K562 (cell line): ENCODE measurements at regions of chr20 and their contacts with region 1.

Region 1: GRCh38 chr20:38453941-38454340 is 18.7 kb upstream of the RALGAPB start:
- DNase-seq: no peak
- ATAC-seq: no peak
- H3K4me3 ChIP-seq: no peak overlapping the region
- H3K27ac ChIP-seq: no peak overlapping the region; the same call in 2 of the 3 replicates
- H3K4me1 ChIP-seq: peaks cover 20 to 43% of the 10 kb centered on the region in 2 experiments
- H3K27me3 ChIP-seq: peaks cover 4 to 12% of the 10 kb centered on the region in 2 experiments; a peak in 4 of 5 replicates
- CTCF ChIP-seq: no peak
- EP300 ChIP-seq: no peak
- POLR2A ChIP-seq: no peak
- RAD21 ChIP-seq: no peak

Region 2: DNA sequence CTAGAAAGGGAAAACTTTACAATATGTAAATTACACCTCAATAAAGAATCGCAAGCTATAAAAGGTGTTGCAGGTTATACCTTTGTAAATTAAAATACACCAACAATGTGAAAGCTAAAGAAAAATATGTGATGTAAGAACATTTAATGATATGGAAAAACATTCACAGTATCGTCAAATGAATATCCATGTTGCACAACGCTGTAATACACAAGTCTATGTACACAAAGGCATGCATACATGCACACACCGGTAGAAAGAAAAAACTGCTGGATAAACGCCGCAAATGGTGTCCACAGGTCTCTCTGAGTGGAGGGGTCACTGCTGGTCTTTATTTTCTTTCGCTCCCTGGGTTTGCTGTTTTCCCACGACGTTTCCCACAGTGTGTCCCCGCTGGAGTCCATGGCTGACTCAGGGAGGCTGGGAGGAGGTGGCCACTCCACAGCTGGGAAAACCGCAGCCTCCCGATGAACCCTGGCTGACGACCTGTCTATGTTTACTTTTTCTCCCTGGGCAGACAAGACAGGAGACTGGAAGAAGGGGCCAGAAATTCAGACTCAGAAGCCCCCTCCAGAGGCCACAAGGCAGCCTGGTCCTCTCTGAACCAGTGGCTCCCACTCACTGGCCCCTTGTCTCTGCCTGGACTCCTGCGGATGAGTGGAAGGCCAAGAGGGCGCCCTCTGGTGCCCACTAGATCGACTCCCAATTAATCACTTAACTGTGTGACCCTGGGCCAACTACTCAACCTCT is 162.9 kb before region 1 on chr20:
- CTCF ChIA-PET with region 1: no interaction called
- POLR2A ChIA-PET with region 1: no interaction called
- in situ Hi-C with region 1: no loop called
- intact Hi-C with region 1: no loop called
- DNase-seq: peak; percentile 38 to 51 (median 48)
- ATAC-seq: peak; percentile 91
- H3K4me3 ChIP-seq: no peak overlapping the region
- H3K27ac ChIP-seq: no peak overlapping the region
- H3K4me1 ChIP-seq: no peaks in the 10 kb centered on the region; a peak in 1 of 5 replicates
- H3K27me3 ChIP-seq: peaks cover 50 to 70% of the 10 kb centered on the region in 2 experiments
- CTCF ChIP-seq: peak; percentile 59 to 67 (median 61)
- EP300 ChIP-seq: no peak
- POLR2A ChIP-seq: no peak
- RAD21 ChIP-seq: peak in 1 of 2 experiments; percentile 42; a peak in 2 of 4 replicates

Region 3: DNA sequence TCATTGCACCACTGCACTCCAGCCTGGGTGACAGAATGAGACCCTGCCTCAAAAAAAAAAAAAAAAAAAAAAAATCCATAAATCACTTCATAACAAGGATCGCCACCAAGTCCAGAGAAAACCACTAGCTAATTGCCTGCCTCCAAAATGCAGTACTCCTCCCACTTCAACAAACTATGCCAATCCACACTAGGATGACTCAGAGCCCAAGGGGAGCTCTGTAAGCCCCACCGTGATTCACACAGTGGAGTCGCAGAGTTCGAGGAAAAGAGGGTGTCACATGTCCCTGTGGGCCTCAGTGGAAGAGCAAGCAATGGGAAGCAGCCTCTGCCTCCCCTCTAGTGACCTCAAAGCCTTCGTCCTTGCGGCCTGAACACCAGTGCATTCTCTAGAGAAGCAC is 27.9 kb before region 1 on chr20:
- CTCF ChIA-PET with region 1: no interaction called
- POLR2A ChIA-PET with region 1: interaction called, 14 read pairs
- in situ Hi-C with region 1: no loop called
- intact Hi-C with region 1: no loop called
- DNase-seq: peak in 2 of 4 experiments; percentile 54 to 59
- ATAC-seq: peak; percentile 14; the same call in 2 of the 3 replicates
- H3K4me3 ChIP-seq: no peak overlapping the region
- H3K27ac ChIP-seq: peak overlapping the region; percentile 23; the same call in 1 of the 3 replicates
- H3K4me1 ChIP-seq: peaks cover 0 to 5% of the 10 kb centered on the region in 2 experiments; a peak in 3 of 5 replicates
- H3K27me3 ChIP-seq: no peaks in the 10 kb centered on the region
- CTCF ChIP-seq: no peak
- EP300 ChIP-seq: no peak
- POLR2A ChIP-seq: no peak
- RAD21 ChIP-seq: no peak

Region 4: DNA sequence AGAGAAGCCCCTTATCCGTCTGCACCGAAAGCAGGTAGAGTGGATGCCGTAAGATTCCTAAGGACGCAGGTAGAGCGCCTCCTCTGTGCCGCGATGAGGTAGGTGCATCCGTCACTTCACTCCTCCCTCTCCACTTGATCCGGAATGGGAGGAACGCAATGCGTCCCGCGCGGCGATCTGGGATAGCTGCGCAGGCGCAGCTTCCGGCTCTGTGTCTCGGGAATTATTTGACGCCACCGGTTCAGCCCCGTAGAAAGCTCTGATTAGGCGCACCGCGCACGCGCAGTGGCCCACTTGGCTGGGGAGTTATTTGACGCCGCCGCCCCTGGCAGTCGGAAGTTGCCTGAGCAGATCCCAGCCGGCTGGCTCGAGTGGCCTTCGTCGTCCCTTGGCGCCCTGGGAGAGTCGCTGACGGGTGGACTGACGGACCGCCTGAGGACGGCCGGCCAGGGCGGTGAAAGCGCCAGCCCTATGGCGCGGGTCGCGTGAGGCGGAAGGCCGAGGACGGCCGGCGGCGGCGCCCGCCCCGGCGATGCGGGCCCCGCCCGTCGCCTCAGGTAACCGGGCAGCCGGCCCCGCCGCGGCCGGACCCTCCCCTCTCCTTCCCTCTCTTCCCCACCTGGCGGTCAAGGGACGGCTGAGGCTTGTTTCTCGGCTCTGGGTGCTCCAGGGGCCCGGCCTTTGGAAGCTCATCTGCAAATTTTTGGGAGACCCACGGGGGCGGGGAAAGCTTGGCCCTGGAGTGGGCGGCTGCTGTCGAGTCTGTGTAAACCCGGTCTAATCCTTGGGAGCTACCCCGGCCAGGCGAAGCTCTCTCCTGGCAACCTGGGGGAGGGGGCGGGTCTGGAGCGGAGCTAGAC is 18.8 kb after region 1 on chr20 and contains the start of gene RALGAPB:
- CTCF ChIA-PET with region 1: no interaction called
- POLR2A ChIA-PET with region 1: interaction called, 10 read pairs
- in situ Hi-C with region 1: no loop called
- intact Hi-C with region 1: loop called (anchors 2 kb)
- DNase-seq: peak; percentile 92 to 100 (median 95)
- ATAC-seq: peak; percentile 96
- H3K4me3 ChIP-seq: peak within 1 kb of the TSS; percentile 96
- H3K27ac ChIP-seq: peak within 1 kb of the TSS; percentile 74
- H3K4me1 ChIP-seq: peaks cover 10 to 16% of the 10 kb centered on the region in 2 experiments; a peak in 4 of 5 replicates
- H3K27me3 ChIP-seq: no peaks in the 10 kb centered on the region
- CTCF ChIP-seq: peak; percentile 62 to 73 (median 70)
- EP300 ChIP-seq: no peak
- POLR2A ChIP-seq: peak; percentile 75
- RAD21 ChIP-seq: peak; percentile 42 to 63; a peak in 2 of 4 replicates
- polyA plus RNA-seq, gene RALGAPB: 4.3 to 6.0 TPM

Region 5: GRCh38 chr20:38601216-38602184 is 147.6 kb after region 1 on chr20 and contains the start of gene ARHGAP40:
- CTCF ChIA-PET with region 1: no interaction called
- POLR2A ChIA-PET with region 1: no interaction called
- in situ Hi-C with region 1: no loop called
- intact Hi-C with region 1: no loop called
- DNase-seq: peak; percentile 46 to 73 (median 64)
- ATAC-seq: peak; percentile 98
- H3K4me3 ChIP-seq: peak within 1 kb of the TSS; percentile 10; the same call in 1 of the 2 replicates
- H3K27ac ChIP-seq: no peak within 1 kb of the TSS
- H3K4me1 ChIP-seq: peaks cover 3 to 12% of the 10 kb centered on the region in 2 experiments; a peak in 4 of 5 replicates
- H3K27me3 ChIP-seq: peaks cover 22 to 27% of the 10 kb centered on the region in 2 experiments
- CTCF ChIP-seq: peak; percentile 24 to 41 (median 24); a peak in 5 of 6 replicates
- EP300 ChIP-seq: no peak
- POLR2A ChIP-seq: no peak
- RAD21 ChIP-seq: 0 out of 4 replicates have a peak, but pooled peaks of 1 of the 2 experiments have one; percentile 5
- polyA plus RNA-seq, gene ARHGAP40: not detected